ENCODE measurements at regions of chr16 and their contacts with region 1.

Region 1: DNA sequence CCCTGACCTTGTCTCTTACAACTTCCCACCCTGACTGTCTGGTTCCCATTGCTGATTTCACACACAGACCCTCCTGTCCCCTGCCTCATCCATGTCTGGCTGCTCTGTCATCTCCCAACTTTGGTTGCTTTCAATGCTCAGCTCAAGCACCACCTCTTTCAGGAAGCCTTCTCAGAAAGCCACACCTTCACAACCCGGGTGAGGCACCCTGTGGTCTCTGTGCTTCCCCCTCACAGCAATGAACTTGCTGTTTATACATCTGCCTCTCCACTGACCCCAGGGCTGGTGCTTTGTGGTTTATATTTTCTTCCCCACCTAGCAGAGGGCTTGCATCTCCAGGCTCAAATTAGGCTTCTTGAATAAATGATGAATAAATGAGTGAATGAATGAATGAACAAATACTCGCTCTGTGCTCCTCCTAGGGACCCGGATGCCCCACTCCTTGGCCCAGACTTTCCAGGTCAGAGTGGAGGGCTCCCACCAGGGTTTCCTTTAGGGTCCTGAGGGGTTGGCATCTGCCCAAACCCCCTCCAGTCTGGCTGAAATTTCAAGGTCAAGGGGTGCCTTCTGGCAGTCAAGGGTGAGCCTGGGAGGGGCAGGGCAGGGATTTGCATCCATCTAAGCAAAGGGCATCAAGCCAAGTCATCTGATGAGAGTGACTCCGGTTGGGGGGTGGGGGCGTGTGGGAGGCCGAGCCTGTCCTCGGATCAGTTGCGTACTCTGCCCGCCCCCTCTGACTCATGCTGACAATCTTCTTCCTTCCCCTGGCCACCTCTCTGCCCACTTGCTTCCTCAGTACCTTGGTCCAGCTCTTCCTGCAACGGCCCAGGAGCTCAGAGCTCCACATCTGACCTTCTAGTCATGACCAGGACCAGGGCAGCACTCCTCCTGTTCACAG is at the start of gene ITGAX:
- DNase-seq: peak; percentile 76
- H3K4me3 Mint-ChIP-seq: peak within 1 kb of the TSS; percentile 84
- H3K27ac Mint-ChIP-seq: peak within 1 kb of the TSS; percentile 99
- H3K4me1 Mint-ChIP-seq: peaks cover 69% of the 10 kb centered on the region
- H3K27me3 Mint-ChIP-seq: no peaks in the 10 kb centered on the region
- total RNA-seq, gene ITGAX: 63.8 and 65.0 TPM in 2 replicates

Region 2: GRCh38 chr16:31032736-31033708 is 321.6 kb before region 1 on chr16 and contains the start of gene STX4:
- intact Hi-C with region 1: loop called (anchors 1 kb)
- DNase-seq: peak; percentile 97
- H3K4me3 Mint-ChIP-seq: peak within 1 kb of the TSS; percentile 95
- H3K27ac Mint-ChIP-seq: peak within 1 kb of the TSS; percentile 92
- H3K4me1 Mint-ChIP-seq: peaks cover 24% of the 10 kb centered on the region
- H3K27me3 Mint-ChIP-seq: no peaks in the 10 kb centered on the region
- total RNA-seq, gene STX4: 56.4 and 58.7 TPM in 2 replicates

Region 3: GRCh38 chr16:31044190-31044481 is 310.5 kb before region 1 on chr16:
- intact Hi-C with region 1: no loop called
- DNase-seq: no peak
- H3K4me3 Mint-ChIP-seq: no peak overlapping the region
- H3K27ac Mint-ChIP-seq: no peak overlapping the region
- H3K4me1 Mint-ChIP-seq: no peaks in the 10 kb centered on the region
- H3K27me3 Mint-ChIP-seq: no peaks in the 10 kb centered on the region

Region 4: GRCh38 chr16:31179747-31180459 is 174.7 kb before region 1 on chr16 and contains the start of gene FUS:
- intact Hi-C with region 1: loop called (anchors 2 kb)
- DNase-seq: peak; percentile 88
- H3K4me3 Mint-ChIP-seq: peak within 1 kb of the TSS; percentile 98
- H3K27ac Mint-ChIP-seq: peak within 1 kb of the TSS; percentile 99
- H3K4me1 Mint-ChIP-seq: peaks cover 54% of the 10 kb centered on the region
- H3K27me3 Mint-ChIP-seq: no peaks in the 10 kb centered on the region
- total RNA-seq, gene FUS: 950 and 955 TPM in 2 replicates

Region 5: GRCh38 chr16:31265329-31266245 is 89.1 kb before region 1 on chr16:
- intact Hi-C with region 1: loop called (anchors 2 kb)
- DNase-seq: peak; percentile 78
- H3K4me3 Mint-ChIP-seq: peak overlapping the region; percentile 80
- H3K27ac Mint-ChIP-seq: peak overlapping the region; percentile 95
- H3K4me1 Mint-ChIP-seq: peaks cover 71% of the 10 kb centered on the region
- H3K27me3 Mint-ChIP-seq: no peaks in the 10 kb centered on the region

Region 6: DNA sequence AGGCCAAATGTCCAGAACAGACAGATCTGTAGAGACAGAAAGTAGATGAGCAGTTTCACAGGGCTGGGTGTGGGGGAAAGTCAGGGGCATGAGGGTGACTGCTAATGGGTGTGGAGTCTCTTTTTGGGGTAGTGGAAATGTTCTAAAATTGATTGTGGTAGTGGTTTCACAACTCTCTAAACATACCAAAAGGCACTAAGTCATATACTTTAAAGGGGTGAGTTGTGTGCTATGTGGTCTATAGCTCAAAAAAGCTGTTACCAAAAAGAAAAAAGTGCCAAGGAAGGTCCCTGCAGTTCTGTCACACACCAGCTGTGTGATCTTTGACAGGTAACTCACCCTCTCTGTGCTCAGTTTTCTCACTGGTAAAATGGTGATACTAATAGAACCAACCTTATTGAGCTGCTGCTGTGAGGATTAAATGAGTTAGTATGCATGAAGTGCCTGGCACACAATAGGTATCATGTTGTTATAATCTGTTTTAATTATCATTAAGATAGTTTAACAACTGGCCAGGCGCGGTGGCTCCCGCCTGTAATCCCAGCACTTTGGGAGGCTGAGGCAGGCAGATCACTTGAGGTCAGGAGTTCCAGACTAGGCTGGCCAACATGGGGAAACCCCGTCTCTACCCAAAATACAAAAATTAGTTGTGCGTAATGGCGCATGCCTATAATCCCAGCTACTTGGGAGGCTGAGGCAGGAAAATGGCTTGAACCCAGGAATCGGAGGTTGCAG is 10.7 kb after region 1 on chr16:
- intact Hi-C with region 1: loop called (anchors 1 kb)
- DNase-seq: no peak
- H3K4me3 Mint-ChIP-seq: no peak overlapping the region
- H3K27ac Mint-ChIP-seq: peak overlapping the region; percentile 70
- H3K4me1 Mint-ChIP-seq: peaks cover 47% of the 10 kb centered on the region
- H3K27me3 Mint-ChIP-seq: no peaks in the 10 kb centered on the region

Region 7: GRCh38 chr16:31440516-31441184 is 86.0 kb after region 1 on chr16:
- intact Hi-C with region 1: loop called (anchors 2 kb)
- DNase-seq: no peak
- H3K4me3 Mint-ChIP-seq: no peak overlapping the region
- H3K27ac Mint-ChIP-seq: no peak overlapping the region
- H3K4me1 Mint-ChIP-seq: peaks cover 19% of the 10 kb centered on the region
- H3K27me3 Mint-ChIP-seq: peaks cover 9% of the 10 kb centered on the region